Transverse colon (tissue), 4 donors: ENCODE measurements at regions of chr1 and their contacts with region 1.

Region 1: DNA sequence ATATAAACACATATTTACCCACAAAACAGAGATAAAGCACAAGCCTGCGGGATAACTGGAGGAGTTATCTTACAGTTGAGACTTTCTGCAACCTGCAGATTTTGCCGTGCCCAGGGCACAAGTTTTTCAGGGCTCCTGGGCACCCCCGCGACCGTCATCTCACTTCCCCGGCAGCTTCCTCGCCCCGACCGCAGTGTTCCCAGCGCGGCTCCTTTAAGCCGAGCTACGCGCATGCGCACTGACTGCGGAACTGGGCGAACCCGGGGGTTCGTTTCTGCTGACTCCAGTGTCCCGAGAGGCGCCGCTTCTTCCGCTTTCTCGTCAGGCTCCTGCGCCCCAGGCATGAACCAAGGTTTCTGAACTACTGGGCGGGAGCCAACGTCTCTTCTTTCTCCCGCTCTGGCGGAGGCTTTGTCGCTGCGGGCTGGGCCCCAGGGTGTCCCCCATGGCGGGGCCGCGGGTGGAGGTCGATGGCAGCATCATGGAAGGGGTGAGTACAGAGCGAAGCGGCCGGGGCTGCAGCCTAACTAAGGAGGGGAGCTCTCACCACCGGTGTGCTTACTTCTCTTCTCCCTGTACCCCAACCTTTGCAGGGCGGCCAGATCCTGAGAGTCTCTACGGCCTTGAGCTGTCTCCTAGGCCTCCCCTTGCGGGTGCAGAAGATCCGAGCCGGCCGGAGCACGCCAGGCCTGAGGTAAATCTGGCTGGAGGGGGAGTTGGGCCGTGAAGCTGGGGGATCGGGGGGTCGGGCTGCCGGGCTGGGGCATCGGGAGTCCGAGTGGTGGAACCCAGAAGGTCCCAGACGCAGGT is at the start of gene RTCA:
- DNase-seq: peak; percentile 97
- H3K4me3 ChIP-seq: peak within 1 kb of the TSS; percentile 88 to 96 (median 92)
- H3K27ac ChIP-seq: peak within 1 kb of the TSS; percentile 90 to 96 (median 93)
- H3K4me1 ChIP-seq: peaks cover 7 to 30% (median 17%) of the 10 kb centered on the region in 4 donors
- H3K27me3 ChIP-seq: no peaks in the 10 kb centered on the region
- CTCF ChIP-seq: no peak
- EP300 ChIP-seq: no peak
- POLR2A ChIP-seq: peak; percentile 71
- total RNA-seq, gene RTCA: 6.0 to 41.9 (median 36.1) TPM

Region 2: GRCh38 chr1:100051401-100051800 is 214.7 kb before region 1 on chr1:
- in situ Hi-C with region 1: no loop called
- intact Hi-C with region 1: no loop called
- DNase-seq: no peak
- H3K4me3 ChIP-seq: no peak overlapping the region
- H3K27ac ChIP-seq: no peak overlapping the region
- H3K4me1 ChIP-seq: peaks cover 0 to 19% (median 7%) of the 10 kb centered on the region in 4 donors
- H3K27me3 ChIP-seq: no peaks in the 10 kb centered on the region
- CTCF ChIP-seq: no peak
- EP300 ChIP-seq: no peak
- POLR2A ChIP-seq: no peak

Region 3: DNA sequence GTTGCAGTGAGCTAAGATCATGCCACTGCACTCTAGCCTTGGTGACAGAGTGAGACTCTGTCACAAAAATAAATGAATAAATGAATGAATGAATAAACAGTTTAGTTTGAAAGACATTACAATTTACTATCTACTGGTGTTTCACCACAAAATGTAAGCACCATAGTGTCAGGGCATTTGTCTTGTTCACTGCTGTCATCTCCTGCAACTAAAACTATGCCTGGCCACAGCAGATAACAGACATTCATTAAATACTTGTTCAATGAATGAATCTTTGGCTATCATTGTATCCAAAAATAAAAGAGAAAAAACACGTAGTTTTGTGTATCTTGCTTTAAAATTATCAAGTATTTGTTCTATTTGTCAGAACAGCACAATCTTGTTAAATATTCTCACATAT is 165.9 kb before region 1 on chr1:
- in situ Hi-C with region 1: no loop called
- intact Hi-C with region 1: no loop called
- DNase-seq: no peak
- H3K4me3 ChIP-seq: no peak overlapping the region
- H3K27ac ChIP-seq: no peak overlapping the region
- H3K4me1 ChIP-seq: no peaks in the 10 kb centered on the region
- H3K27me3 ChIP-seq: no peaks in the 10 kb centered on the region
- CTCF ChIP-seq: no peak
- EP300 ChIP-seq: no peak
- POLR2A ChIP-seq: no peak

Region 4: GRCh38 chr1:100132566-100133477 is 133.3 kb before region 1 on chr1 and contains the starts of genes SASS6 and TRMT13:
- in situ Hi-C with region 1: no loop called
- intact Hi-C with region 1: loop called (anchors 5 kb)
- DNase-seq: peak; percentile 98
- H3K4me3 ChIP-seq: peak within 1 kb of the TSS; percentile 61 to 99 (median 78)
- H3K27ac ChIP-seq: peak within 1 kb of the TSS; percentile 67 to 89 (median 83)
- H3K4me1 ChIP-seq: peaks cover 15 to 20% (median 16%) of the 10 kb centered on the region in 4 donors
- H3K27me3 ChIP-seq: no peaks in the 10 kb centered on the region
- CTCF ChIP-seq: peak in 3 of 5 experiments; percentile 5 to 41 (median 33)
- EP300 ChIP-seq: peak; percentile 44
- POLR2A ChIP-seq: peak; percentile 17
- total RNA-seq, gene SASS6: 1.2 to 2.4 (median 2.0) TPM
- total RNA-seq, gene TRMT13: 3.7 to 25.4 (median 16.7) TPM